Heart right ventricle (tissue), 16 donors: ENCODE measurements at regions of chr15 and their contacts with region 1.

Region 1: GRCh38 chr15:93974804-93975481 is 256.4 kb upstream of the MCTP2 start:
- DNase-seq: no peak
- ATAC-seq: peak in 4 of 8 donors; percentile 40 to 59 (median 50)
- H3K4me3 ChIP-seq: no peak overlapping the region
- H3K27ac ChIP-seq: no peak overlapping the region
- H3K4me1 ChIP-seq: peaks cover 0 to 3% (median 0%) of the 10 kb centered on the region in 9 donors
- H3K27me3 ChIP-seq: no peaks in the 10 kb centered on the region
- CTCF ChIP-seq: peak in 7 of 9 donors; percentile 7 to 56 (median 39)

Region 2: DNA sequence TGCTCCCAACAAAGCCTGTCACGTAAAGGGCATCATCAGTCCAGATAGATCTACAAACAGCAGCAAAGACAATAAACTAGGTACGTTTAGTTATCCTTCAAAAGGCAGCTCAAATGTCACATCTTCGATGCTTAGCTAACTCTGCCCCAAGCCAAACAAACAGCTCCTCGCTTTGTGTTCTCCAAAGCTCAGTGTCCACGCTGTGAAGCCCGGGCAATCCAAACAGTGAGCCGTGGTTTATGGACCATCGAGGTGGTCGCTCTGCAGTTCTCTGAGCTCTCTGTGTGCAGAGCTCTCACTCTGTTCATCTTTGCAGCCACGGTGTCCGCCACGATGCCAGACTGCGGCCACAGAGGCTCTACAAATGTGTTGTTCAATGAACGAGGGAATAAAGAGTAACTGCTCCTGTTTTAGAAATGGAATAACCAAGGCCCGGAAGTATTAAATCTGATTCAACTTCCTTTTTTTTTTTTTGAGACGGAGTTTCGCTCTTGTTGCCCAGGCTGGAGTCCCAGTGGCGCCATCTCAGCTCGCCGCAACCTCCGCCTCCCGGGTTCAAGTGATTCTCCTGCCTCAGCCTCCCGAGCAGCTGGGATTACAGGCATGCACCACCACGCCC is 1202.2 kb before region 1 on chr15:
- intact Hi-C with region 1: no loop called
- DNase-seq: no peak
- ATAC-seq: no peak
- H3K4me3 ChIP-seq: no peak overlapping the region
- H3K27ac ChIP-seq: no peak overlapping the region
- H3K4me1 ChIP-seq: no peaks in the 10 kb centered on the region
- H3K27me3 ChIP-seq: no peaks in the 10 kb centered on the region
- CTCF ChIP-seq: no peak

Region 3: GRCh38 chr15:93030430-93031105 is 944.4 kb before region 1 on chr15:
- intact Hi-C with region 1: loop called in 4 of 10 experiments (anchors 5 to 10 kb)
- DNase-seq: peak; percentile 55 to 75
- ATAC-seq: peak; percentile 49 to 78 (median 74)
- H3K4me3 ChIP-seq: no peak overlapping the region
- H3K27ac ChIP-seq: peak overlapping the region in 9 of 10 donors; percentile 51 to 91 (median 85)
- H3K4me1 ChIP-seq: peaks cover 24 to 55% (median 48%) of the 10 kb centered on the region in 9 donors
- H3K27me3 ChIP-seq: no peaks in the 10 kb centered on the region
- CTCF ChIP-seq: peak; percentile 75 to 92 (median 89)

Region 4: GRCh38 chr15:93035953-93036800 is 938.8 kb before region 1 on chr15:
- intact Hi-C with region 1: loop called in 4 of 10 experiments (anchors 5 to 10 kb)
- DNase-seq: no peak
- ATAC-seq: peak in 4 of 8 donors; percentile 22 to 46 (median 38)
- H3K4me3 ChIP-seq: no peak overlapping the region
- H3K27ac ChIP-seq: peak overlapping the region in 2 of 10 donors; percentile 58 to 64
- H3K4me1 ChIP-seq: peaks cover 0 to 35% (median 5%) of the 10 kb centered on the region in 9 donors
- H3K27me3 ChIP-seq: no peaks in the 10 kb centered on the region
- CTCF ChIP-seq: peak; percentile 33 to 68 (median 59)